PC-9 (cell line): ENCODE measurements at regions of chr13 and their contacts with region 1.

Region 1: GRCh38 chr13:97344265-97345175 is 89.4 kb upstream of the RAP2A start:
- DNase-seq: peak; percentile 43 to 50
- H3K4me3 ChIP-seq: no peak overlapping the region
- H3K27ac ChIP-seq: 0 out of 2 replicates have a peak overlapping the region, but pooled peaks have one; percentile 14
- H3K4me1 ChIP-seq: no peaks in the 10 kb centered on the region
- H3K27me3 ChIP-seq: no peaks in the 10 kb centered on the region
- CTCF ChIP-seq: peak; percentile 76

Region 2: GRCh38 chr13:97005665-97006262 is 338.8 kb before region 1 on chr13:
- CTCF ChIA-PET with region 1: no interaction called
- POLR2A ChIA-PET with region 1: interaction called, 17 read pairs
- intact Hi-C with region 1: no loop called
- DNase-seq: peak in 1 of 2 experiments; percentile 54
- H3K4me3 ChIP-seq: no peak overlapping the region
- H3K27ac ChIP-seq: no peak overlapping the region
- H3K4me1 ChIP-seq: peaks cover 10% of the 10 kb centered on the region; the same call in 1 of the 2 replicates
- H3K27me3 ChIP-seq: no peaks in the 10 kb centered on the region
- CTCF ChIP-seq: no peak

Region 3: GRCh38 chr13:97212601-97213040 is 131.9 kb before region 1 on chr13:
- CTCF ChIA-PET with region 1: no interaction called
- POLR2A ChIA-PET with region 1: no interaction called
- intact Hi-C with region 1: loop called (anchors 2 kb)
- DNase-seq: peak; percentile 40 to 55
- H3K4me3 ChIP-seq: no peak overlapping the region
- H3K27ac ChIP-seq: peak overlapping the region; percentile 20; the same call in 1 of the 2 replicates
- H3K4me1 ChIP-seq: peaks cover 26% of the 10 kb centered on the region
- H3K27me3 ChIP-seq: no peaks in the 10 kb centered on the region
- CTCF ChIP-seq: peak; percentile 83